Right ventricle myocardium superior (tissue), 1 donor: ENCODE measurements at regions of chr3 and their contacts with region 1.

Region 1: GRCh38 chr3:194472290-194472920 is 14.4 kb downstream of the ATP13A3 start:
- DNase-seq: no peak
- ATAC-seq: peak; percentile 61

Region 2: GRCh38 chr3:194577986-194578905 is 105.8 kb after region 1 on chr3:
- intact Hi-C with region 1: loop called (anchors 5 kb)
- DNase-seq: no peak
- ATAC-seq: peak; percentile 5

Region 3: GRCh38 chr3:194592798-194593752 is 120.7 kb after region 1 on chr3:
- intact Hi-C with region 1: loop called (anchors 5 kb)
- DNase-seq: peak; percentile 21
- ATAC-seq: no peak